ENCODE measurements at regions of chr4 and their contacts with region 1.

Region 1: GRCh38 chr4:99949034-99949998 is 759 bp downstream of the H2AZ1 start:
- DNase-seq: peak; percentile 93
- ATAC-seq: peak; percentile 26
- H3K4me3 ChIP-seq: peak overlapping the region; percentile 84 to 96 (median 84)
- H3K4me3 Mint-ChIP-seq: no peak overlapping the region
- H3K27ac ChIP-seq: peak overlapping the region; percentile 83 to 93
- H3K27ac Mint-ChIP-seq: no peak overlapping the region
- H3K4me1 ChIP-seq: peaks cover 32 to 37% of the 10 kb centered on the region in 2 donors
- H3K4me1 Mint-ChIP-seq: peaks cover 33% of the 10 kb centered on the region
- H3K27me3 ChIP-seq: no peaks in the 10 kb centered on the region
- H3K27me3 Mint-ChIP-seq: no peaks in the 10 kb centered on the region
- CTCF ChIP-seq: peak; percentile 88

Region 2: DNA sequence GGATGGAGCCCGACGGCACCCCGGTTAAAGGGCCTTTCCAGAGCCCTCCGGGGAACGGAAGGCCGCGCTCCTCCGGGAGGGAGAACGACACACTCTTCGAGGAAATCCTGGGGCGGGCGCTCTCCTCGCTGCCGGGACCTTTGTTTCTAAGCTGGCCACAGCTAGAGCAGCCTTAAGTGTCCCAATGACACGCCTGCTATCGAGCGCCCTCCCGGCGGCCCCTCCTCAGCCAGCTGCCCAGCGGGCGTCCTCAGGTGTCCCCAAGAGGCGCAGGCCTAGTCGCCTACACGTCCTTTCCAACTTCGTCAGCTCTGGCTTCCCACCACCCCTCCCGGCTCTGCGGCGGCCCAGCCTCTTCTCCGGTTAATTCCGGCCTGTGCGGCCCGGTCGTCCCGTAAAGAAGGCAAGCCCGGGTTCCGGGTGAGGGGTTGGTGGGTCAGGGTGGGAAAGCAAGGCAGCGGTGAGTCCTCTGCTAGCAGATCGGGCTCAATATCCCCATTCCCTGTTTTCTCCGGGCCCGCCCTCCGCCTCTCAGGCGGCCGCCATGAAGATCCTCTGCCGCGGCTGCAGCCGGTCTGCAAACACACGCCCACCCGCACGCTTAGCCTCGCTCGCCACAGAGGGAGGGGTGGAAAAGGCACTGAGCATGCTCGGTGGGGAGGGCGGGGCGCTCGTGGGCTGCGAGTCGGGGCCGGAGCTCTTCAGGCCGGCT is 1688.6 kb before region 1 on chr4:
- CTCF ChIA-PET with region 1: no interaction called
- POLR2A ChIA-PET with region 1: no interaction called
- intact Hi-C with region 1: loop called (anchors 5 kb)
- DNase-seq: peak; percentile 95
- ATAC-seq: peak; percentile 91
- H3K4me3 ChIP-seq: peak overlapping the region; percentile 71 to 98 (median 95)
- H3K4me3 Mint-ChIP-seq: peak overlapping the region; percentile 97
- H3K27ac ChIP-seq: peak overlapping the region; percentile 84 to 90
- H3K27ac Mint-ChIP-seq: peak overlapping the region; percentile 98
- H3K4me1 ChIP-seq: peaks cover 18 to 25% of the 10 kb centered on the region in 2 donors
- H3K4me1 Mint-ChIP-seq: peaks cover 40% of the 10 kb centered on the region
- H3K27me3 ChIP-seq: no peaks in the 10 kb centered on the region
- H3K27me3 Mint-ChIP-seq: no peaks in the 10 kb centered on the region
- CTCF ChIP-seq: no peak

Region 3: GRCh38 chr4:99088481-99089365 is 860.6 kb before region 1 on chr4 and contains the start of gene ADH5:
- CTCF ChIA-PET with region 1: no interaction called
- POLR2A ChIA-PET with region 1: no interaction called
- intact Hi-C with region 1: loop called (anchors 5 kb)
- DNase-seq: peak; percentile 90
- ATAC-seq: peak; percentile 95
- H3K4me3 ChIP-seq: peak within 1 kb of the TSS; percentile 75 to 99 (median 96)
- H3K4me3 Mint-ChIP-seq: peak within 1 kb of the TSS; percentile 98
- H3K27ac ChIP-seq: peak within 1 kb of the TSS; percentile 84
- H3K27ac Mint-ChIP-seq: peak within 1 kb of the TSS; percentile 98
- H3K4me1 ChIP-seq: peaks cover 15 to 25% of the 10 kb centered on the region in 2 donors
- H3K4me1 Mint-ChIP-seq: peaks cover 46% of the 10 kb centered on the region
- H3K27me3 ChIP-seq: no peaks in the 10 kb centered on the region
- H3K27me3 Mint-ChIP-seq: no peaks in the 10 kb centered on the region
- CTCF ChIP-seq: no peak
- total RNA-seq, gene ADH5: 59.2 and 65.6 TPM in 2 replicates

Region 4: DNA sequence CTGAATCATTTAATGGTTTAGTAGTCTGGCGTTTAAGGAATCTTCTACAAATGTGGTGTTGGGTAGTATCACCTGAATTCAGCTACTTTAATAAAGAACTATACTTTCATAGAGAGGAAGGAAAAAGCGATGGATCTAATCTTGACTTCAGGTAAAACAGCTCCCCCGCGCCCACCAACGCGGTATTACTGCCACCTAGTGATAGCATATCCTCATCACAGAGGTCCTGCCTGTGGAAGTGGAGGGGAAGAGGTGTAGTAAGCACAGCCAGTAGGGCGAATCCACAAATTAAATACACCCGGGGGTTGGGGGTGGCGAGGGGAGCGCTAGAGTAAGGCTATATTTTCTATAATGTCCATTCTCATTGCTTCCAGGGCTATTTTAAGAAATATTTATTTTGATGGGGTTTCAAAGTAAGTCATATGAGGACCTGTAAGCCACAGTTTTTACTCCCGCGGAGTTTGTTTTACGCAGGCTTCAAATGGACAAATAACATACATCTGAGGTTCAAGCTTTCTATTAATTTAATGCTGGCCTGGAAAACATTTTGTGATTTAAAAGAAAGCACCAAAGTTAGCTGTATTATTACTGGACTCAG is 141.0 kb before region 1 on chr4:
- CTCF ChIA-PET with region 1: interaction called, 35 read pairs
- POLR2A ChIA-PET with region 1: interaction called, 3 read pairs
- intact Hi-C with region 1: no loop called
- DNase-seq: peak; percentile 80
- ATAC-seq: peak; percentile 96
- H3K4me3 ChIP-seq: no peak overlapping the region
- H3K4me3 Mint-ChIP-seq: no peak overlapping the region
- H3K27ac ChIP-seq: no peak overlapping the region
- H3K27ac Mint-ChIP-seq: no peak overlapping the region
- H3K4me1 ChIP-seq: peaks cover 0 to 20% of the 10 kb centered on the region in 2 donors
- H3K4me1 Mint-ChIP-seq: peaks cover 25% of the 10 kb centered on the region
- H3K27me3 ChIP-seq: peaks cover 0 to 2% (median 0%) of the 10 kb centered on the region in 4 experiments
- H3K27me3 Mint-ChIP-seq: peaks cover 11% of the 10 kb centered on the region
- CTCF ChIP-seq: peak; percentile 83

Region 5: DNA sequence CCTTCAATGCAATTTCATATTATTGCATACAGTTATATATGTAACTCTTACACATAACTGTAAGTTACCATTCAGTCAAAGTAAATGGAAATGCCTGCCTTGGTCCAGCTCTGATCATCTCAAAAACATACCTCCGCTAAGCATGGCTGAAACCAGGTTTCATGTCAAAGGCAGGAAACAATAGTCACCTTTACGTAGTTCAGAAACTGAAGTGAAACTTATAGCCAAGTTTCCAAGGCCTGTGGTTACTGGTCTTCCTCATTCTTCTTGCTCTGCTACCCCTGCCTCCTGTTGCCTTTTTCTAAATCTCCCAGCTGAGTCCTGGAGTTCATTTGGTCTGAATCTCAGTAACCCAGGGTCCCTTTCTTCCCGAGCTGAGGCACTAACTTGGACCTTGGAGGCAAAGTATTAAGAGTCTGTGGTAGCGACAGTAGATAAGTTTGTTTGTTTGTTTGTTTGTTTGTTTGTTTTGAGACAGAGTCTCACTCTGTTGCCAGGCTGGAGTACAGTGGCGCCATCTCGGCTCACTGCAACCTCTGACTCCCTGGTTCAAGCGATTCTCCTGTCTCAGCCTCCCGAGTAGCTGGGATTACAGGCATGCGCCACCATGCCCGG is 101.8 kb before region 1 on chr4:
- CTCF ChIA-PET with region 1: interaction called, 3 read pairs
- POLR2A ChIA-PET with region 1: no interaction called
- intact Hi-C with region 1: loop called (anchors 2 kb)
- DNase-seq: peak; percentile 79
- ATAC-seq: peak; percentile 81
- H3K4me3 ChIP-seq: no peak overlapping the region
- H3K4me3 Mint-ChIP-seq: peak overlapping the region; percentile 72
- H3K27ac ChIP-seq: peak overlapping the region; percentile 3 to 56
- H3K27ac Mint-ChIP-seq: peak overlapping the region; percentile 84
- H3K4me1 ChIP-seq: peaks cover 31 to 38% of the 10 kb centered on the region in 2 donors
- H3K4me1 Mint-ChIP-seq: peaks cover 68% of the 10 kb centered on the region
- H3K27me3 ChIP-seq: no peaks in the 10 kb centered on the region
- H3K27me3 Mint-ChIP-seq: no peaks in the 10 kb centered on the region
- CTCF ChIP-seq: no peak

Region 6: DNA sequence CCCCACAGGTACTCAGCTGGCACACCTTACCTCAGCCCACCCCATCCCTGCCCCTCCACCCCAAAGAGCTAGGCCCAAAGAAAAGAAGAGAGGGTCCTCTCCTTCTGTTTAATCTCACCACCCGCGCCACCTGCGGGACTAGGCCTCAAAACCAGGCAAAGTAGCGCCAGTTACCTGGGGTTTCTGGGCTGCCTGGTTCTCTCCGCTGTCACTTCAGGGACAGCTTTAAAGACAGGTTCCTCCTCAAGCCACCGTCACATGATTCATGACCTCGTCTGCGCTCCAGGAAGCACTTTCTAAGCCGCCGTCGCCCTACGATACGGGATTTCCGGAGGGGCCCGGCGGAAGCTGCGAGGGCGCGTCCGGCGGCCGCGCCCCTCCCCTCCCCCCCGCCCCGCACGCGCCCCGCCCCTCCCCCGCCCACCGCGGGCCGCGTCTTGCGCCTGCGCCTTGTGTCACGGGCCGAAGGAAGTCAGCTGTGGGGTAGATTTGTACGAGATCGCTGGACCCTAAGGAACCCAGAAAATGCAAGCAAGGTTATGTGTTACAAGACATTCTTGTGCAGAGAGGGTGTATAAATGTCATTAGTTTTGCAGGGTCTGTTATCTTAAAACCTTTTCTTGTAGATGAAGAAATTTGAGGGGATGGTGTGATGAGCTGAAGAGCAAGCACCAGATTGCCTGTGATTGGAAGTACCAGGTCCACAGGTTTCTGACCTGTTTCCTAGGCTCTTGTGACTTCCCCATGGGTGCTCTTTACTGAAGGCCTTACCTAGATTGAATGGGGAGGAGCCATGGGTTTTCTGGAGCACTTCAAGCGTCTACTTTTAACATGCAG is 54.9 kb before region 1 on chr4 and contains the start of gene LAMTOR3:
- CTCF ChIA-PET with region 1: interaction called, 24 read pairs
- POLR2A ChIA-PET with region 1: interaction called, 15 read pairs
- intact Hi-C with region 1: loop called (anchors 1 kb)
- DNase-seq: peak; percentile 95
- ATAC-seq: peak; percentile 97
- H3K4me3 ChIP-seq: peak within 1 kb of the TSS; percentile 32 to 94 (median 79)
- H3K4me3 Mint-ChIP-seq: peak within 1 kb of the TSS; percentile 98
- H3K27ac ChIP-seq: peak within 1 kb of the TSS; percentile 74 to 97
- H3K27ac Mint-ChIP-seq: peak within 1 kb of the TSS; percentile 95
- H3K4me1 ChIP-seq: peaks cover 14 to 18% of the 10 kb centered on the region in 2 donors
- H3K4me1 Mint-ChIP-seq: peaks cover 32% of the 10 kb centered on the region
- H3K27me3 ChIP-seq: no peaks in the 10 kb centered on the region
- H3K27me3 Mint-ChIP-seq: no peaks in the 10 kb centered on the region
- CTCF ChIP-seq: no peak
- total RNA-seq, gene LAMTOR3: 18.0 and 20.1 TPM in 2 replicates

Measured in B cell (primary cell).